Panc1 (cell line): ENCODE measurements at regions of chr2 and their contacts with region 1.

Region 1: GRCh38 chr2:68441179-68441993 is 25.7 kb downstream of the FBXO48 start:
- DNase-seq: peak; percentile 54
- ATAC-seq: peak; percentile 96
- H3K4me3 ChIP-seq: no peak overlapping the region
- H3K27ac ChIP-seq: no peak overlapping the region
- H3K4me1 ChIP-seq: peaks cover 7% of the 10 kb centered on the region; the same call in 1 of the 2 replicates
- H3K27me3 ChIP-seq: 0 out of 2 replicates have a peak, but pooled peaks cover 4% of the 10 kb centered on the region
- CTCF ChIP-seq: peak; percentile 89

Region 2: GRCh38 chr2:68121873-68122679 is 319.3 kb before region 1 on chr2:
- CTCF ChIA-PET with region 1: no interaction called
- POLR2A ChIA-PET with region 1: no interaction called
- in situ Hi-C with region 1: no loop called
- intact Hi-C with region 1: loop called (anchors 5 kb)
- DNase-seq: peak; percentile 74
- ATAC-seq: peak; percentile 79
- H3K4me3 ChIP-seq: peak overlapping the region in 1 of 2 experiments; percentile 36; a peak in 2 of 4 replicates
- H3K27ac ChIP-seq: no peak overlapping the region
- H3K4me1 ChIP-seq: no peaks in the 10 kb centered on the region
- H3K27me3 ChIP-seq: no peaks in the 10 kb centered on the region
- CTCF ChIP-seq: peak; percentile 97

Region 3: GRCh38 chr2:68196120-68196716 is 245.2 kb before region 1 on chr2:
- CTCF ChIA-PET with region 1: no interaction called
- POLR2A ChIA-PET with region 1: no interaction called
- in situ Hi-C with region 1: no loop called
- intact Hi-C with region 1: loop called (anchors 5 kb)
- DNase-seq: no peak
- ATAC-seq: no peak
- H3K4me3 ChIP-seq: no peak overlapping the region
- H3K27ac ChIP-seq: no peak overlapping the region
- H3K4me1 ChIP-seq: peaks cover 24% of the 10 kb centered on the region
- H3K27me3 ChIP-seq: no peaks in the 10 kb centered on the region
- CTCF ChIP-seq: peak; percentile 75; the same call in 1 of the 2 replicates

Region 4: DNA sequence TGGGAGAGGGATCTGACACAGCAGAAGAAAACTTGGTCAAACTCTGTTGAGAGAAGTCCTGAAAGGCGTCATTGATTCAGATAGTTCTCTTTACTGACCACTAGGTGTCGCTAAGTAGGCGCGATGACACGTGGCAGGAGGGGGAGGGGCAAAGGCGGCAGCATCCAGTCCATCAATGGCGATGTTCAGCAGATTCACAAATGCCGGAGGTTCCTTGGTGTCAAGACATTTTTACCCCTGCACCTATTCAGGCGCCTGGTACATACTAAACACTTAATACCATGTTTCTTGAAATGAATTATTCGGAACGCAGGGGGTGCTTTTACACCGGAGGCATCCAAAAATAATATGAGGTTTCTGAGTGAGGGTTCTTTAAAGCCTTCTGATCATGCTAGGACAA is 79.3 kb before region 1 on chr2:
- CTCF ChIA-PET with region 1: interaction called, 3 read pairs
- POLR2A ChIA-PET with region 1: no interaction called
- in situ Hi-C with region 1: no loop called
- intact Hi-C with region 1: loop called (anchors 2 kb)
- DNase-seq: peak; percentile 24
- ATAC-seq: peak; percentile 89
- H3K4me3 ChIP-seq: no peak overlapping the region
- H3K27ac ChIP-seq: no peak overlapping the region
- H3K4me1 ChIP-seq: no peaks in the 10 kb centered on the region
- H3K27me3 ChIP-seq: no peaks in the 10 kb centered on the region; the same call in 1 of the 2 replicates
- CTCF ChIP-seq: peak; percentile 86

Region 5: GRCh38 chr2:68379184-68379708 is 62.1 kb before region 1 on chr2:
- CTCF ChIA-PET with region 1: no interaction called
- POLR2A ChIA-PET with region 1: no interaction called
- in situ Hi-C with region 1: no loop called
- intact Hi-C with region 1: no loop called
- DNase-seq: no peak
- ATAC-seq: no peak
- H3K4me3 ChIP-seq: no peak overlapping the region
- H3K27ac ChIP-seq: no peak overlapping the region
- H3K4me1 ChIP-seq: no peaks in the 10 kb centered on the region
- H3K27me3 ChIP-seq: peaks cover 5% of the 10 kb centered on the region
- CTCF ChIP-seq: no peak